ENCODE measurements at regions of chr11 and their contacts with region 1.

Region 1: DNA sequence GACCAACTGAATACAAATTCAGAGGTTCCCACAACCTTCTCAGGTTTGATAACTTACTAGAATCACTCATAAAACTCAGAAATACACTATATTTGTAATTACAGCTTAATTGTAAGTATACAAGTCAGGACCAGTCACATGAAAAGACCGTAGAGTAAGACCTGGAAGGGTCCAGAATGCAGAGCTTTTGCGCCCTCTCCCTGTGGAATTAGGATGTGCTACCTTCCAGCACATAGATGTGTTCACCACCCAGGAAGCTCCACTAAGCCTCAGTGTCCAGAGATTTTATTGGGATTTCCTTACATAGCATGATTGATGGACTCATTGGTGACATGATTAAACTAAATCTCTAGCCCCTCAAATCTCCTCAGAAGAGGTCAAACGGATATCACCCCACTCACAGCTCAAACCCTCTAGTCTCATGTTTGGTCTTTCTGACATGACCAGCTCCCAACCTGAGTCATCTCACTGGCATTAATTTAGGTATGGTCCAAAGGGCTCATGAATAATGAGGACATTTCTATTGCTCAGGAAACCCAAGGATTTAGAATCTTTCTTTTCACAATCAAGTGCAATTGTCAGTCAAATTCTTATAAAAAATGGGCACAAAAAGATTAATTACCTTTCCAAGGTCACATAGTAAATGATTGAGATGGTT is 77.2 kb upstream of the UBASH3B start:
- DNase-seq: no peak
- H3K4me3 ChIP-seq: no peak overlapping the region
- H3K27ac ChIP-seq: no peak overlapping the region
- H3K4me1 ChIP-seq: no peaks in the 10 kb centered on the region
- H3K27me3 ChIP-seq: no peaks in the 10 kb centered on the region
- CTCF ChIP-seq: no peak
- POLR2A ChIP-seq: no peak

Region 2: GRCh38 chr11:122398167-122398566 is 180.1 kb before region 1 on chr11:
- CTCF ChIA-PET with region 1: no interaction called
- POLR2A ChIA-PET with region 1: no interaction called
- dilution Hi-C with region 1: no loop called
- intact Hi-C with region 1: no loop called
- DNase-seq: no peak
- H3K4me3 ChIP-seq: no peak overlapping the region
- H3K27ac ChIP-seq: no peak overlapping the region
- H3K4me1 ChIP-seq: no peaks in the 10 kb centered on the region
- H3K27me3 ChIP-seq: no peaks in the 10 kb centered on the region
- CTCF ChIP-seq: no peak
- POLR2A ChIP-seq: no peak

Region 3: DNA sequence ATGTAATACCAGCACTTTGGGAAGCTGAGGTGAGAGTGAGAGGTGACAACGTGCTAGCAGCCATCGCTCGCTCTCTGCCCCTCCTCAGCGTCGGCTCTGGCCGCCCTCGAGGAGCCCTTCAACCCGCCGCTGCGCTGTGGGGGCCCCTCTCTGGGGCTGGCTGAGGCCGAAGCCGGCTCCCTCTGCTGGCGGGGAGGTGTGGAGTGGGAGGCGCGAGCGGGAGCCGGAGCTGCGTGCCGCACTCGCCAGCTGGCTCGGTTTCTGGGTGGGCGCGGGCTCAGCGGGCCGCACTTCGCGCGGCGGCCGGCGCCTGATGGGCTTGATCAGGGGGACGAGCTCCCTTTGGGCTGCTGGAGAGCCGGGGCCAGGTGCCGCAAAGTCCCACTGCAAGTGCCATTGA is 21.7 kb before region 1 on chr11:
- CTCF ChIA-PET with region 1: interaction called, 12 read pairs
- POLR2A ChIA-PET with region 1: no interaction called
- dilution Hi-C with region 1: no loop called
- intact Hi-C with region 1: no loop called
- DNase-seq: no peak
- H3K4me3 ChIP-seq: no peak overlapping the region
- H3K27ac ChIP-seq: no peak overlapping the region
- H3K4me1 ChIP-seq: no peaks in the 10 kb centered on the region
- H3K27me3 ChIP-seq: no peaks in the 10 kb centered on the region
- CTCF ChIP-seq: peak in 1 of 2 donors; percentile 22
- POLR2A ChIP-seq: no peak

Region 4: DNA sequence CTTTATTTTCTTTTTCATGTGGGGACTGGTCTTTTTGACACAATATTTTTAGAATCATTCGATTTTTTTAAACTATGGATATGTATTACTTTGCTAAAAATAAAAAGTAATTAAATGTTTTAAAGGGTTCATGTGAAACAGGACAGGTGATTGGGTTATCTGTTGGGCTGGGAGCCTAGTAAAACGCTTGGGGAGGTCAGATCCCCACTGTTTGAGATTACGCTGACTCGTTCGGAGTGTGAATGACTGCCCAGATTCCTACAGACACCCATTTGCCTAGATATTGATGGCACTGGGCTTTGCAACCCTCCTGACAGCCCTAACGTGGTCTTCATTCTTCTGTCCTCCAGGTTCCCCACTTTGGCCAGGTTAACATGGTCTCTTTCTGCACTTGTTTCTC is 14.3 kb after region 1 on chr11:
- CTCF ChIA-PET with region 1: interaction called, 10 read pairs
- POLR2A ChIA-PET with region 1: no interaction called
- dilution Hi-C with region 1: no loop called
- intact Hi-C with region 1: no loop called
- DNase-seq: no peak
- H3K4me3 ChIP-seq: no peak overlapping the region
- H3K27ac ChIP-seq: no peak overlapping the region
- H3K4me1 ChIP-seq: no peaks in the 10 kb centered on the region
- H3K27me3 ChIP-seq: peaks cover 0 to 8% of the 10 kb centered on the region in 2 experiments
- CTCF ChIP-seq: no peak
- POLR2A ChIP-seq: no peak

Region 5: DNA sequence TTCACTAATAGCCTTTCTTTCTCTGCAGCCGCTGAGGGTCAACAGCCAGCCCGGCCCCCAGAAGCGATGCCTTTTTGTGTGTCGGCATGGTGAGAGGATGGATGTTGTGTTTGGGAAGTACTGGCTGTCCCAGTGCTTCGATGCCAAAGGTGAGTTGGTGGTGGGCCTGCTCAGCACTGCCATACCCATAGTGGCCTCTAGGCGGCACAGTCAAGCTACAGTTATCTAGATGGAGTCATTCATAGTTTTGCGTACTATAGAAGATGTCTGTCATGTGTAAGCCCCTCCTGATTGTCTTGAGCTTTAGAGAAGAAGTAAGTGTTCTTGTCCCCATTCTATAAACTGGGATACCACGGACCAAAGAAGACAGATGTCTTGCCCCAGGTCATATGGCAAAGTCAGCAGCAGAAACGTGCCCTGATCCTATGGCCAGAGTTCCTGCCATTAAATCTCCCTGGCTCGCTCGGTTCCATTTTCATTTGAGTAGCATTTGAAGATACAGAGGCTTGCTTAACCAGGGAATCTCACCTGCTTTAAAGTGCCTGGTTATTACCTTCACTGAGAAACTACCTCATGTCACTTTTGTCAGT is 217.9 kb after region 1 on chr11:
- CTCF ChIA-PET with region 1: interaction called, 5 read pairs
- POLR2A ChIA-PET with region 1: no interaction called
- dilution Hi-C with region 1: no loop called
- intact Hi-C with region 1: loop called (anchors 1 kb)
- DNase-seq: peak; percentile 42
- H3K4me3 ChIP-seq: no peak overlapping the region
- H3K27ac ChIP-seq: no peak overlapping the region
- H3K4me1 ChIP-seq: peaks cover 7% of the 10 kb centered on the region
- H3K27me3 ChIP-seq: no peaks in the 10 kb centered on the region
- CTCF ChIP-seq: peak; percentile 78 to 81
- POLR2A ChIP-seq: no peak

Region 6: GRCh38 chr11:122893131-122893530 is 314.8 kb after region 1 on chr11:
- CTCF ChIA-PET with region 1: no interaction called
- POLR2A ChIA-PET with region 1: no interaction called
- dilution Hi-C with region 1: no loop called
- intact Hi-C with region 1: no loop called
- DNase-seq: no peak
- H3K4me3 ChIP-seq: no peak overlapping the region
- H3K27ac ChIP-seq: no peak overlapping the region
- H3K4me1 ChIP-seq: peaks cover 18% of the 10 kb centered on the region
- H3K27me3 ChIP-seq: no peaks in the 10 kb centered on the region
- CTCF ChIP-seq: no peak
- POLR2A ChIP-seq: no peak